ENCODE measurements at regions of chr6 and their contacts with region 1.

Region 1: GRCh38 chr6:156776840-156777576 is at the start of gene ARID1B:
- DNase-seq: peak; percentile 94
- H3K4me3 Mint-ChIP-seq: peak within 1 kb of the TSS; percentile 94
- H3K27ac Mint-ChIP-seq: peak within 1 kb of the TSS; percentile 99
- H3K4me1 Mint-ChIP-seq: peaks cover 26% of the 10 kb centered on the region
- H3K27me3 Mint-ChIP-seq: no peaks in the 10 kb centered on the region
- total RNA-seq, gene ARID1B: 61.7 and 67.5 TPM in 2 replicates

Region 2: GRCh38 chr6:156564127-156564806 is 212.7 kb before region 1 on chr6:
- intact Hi-C with region 1: loop called (anchors 10 kb)
- DNase-seq: peak; percentile 92
- H3K4me3 Mint-ChIP-seq: no peak overlapping the region
- H3K27ac Mint-ChIP-seq: no peak overlapping the region
- H3K4me1 Mint-ChIP-seq: peaks cover 2% of the 10 kb centered on the region
- H3K27me3 Mint-ChIP-seq: peaks cover 13% of the 10 kb centered on the region

Region 3: GRCh38 chr6:156857573-156857972 is 80.6 kb after region 1 on chr6:
- intact Hi-C with region 1: loop called (anchors 1 kb)
- DNase-seq: no peak
- H3K4me3 Mint-ChIP-seq: no peak overlapping the region
- H3K27ac Mint-ChIP-seq: peak overlapping the region; percentile 92
- H3K4me1 Mint-ChIP-seq: peaks cover 48% of the 10 kb centered on the region
- H3K27me3 Mint-ChIP-seq: no peaks in the 10 kb centered on the region

Region 4: DNA sequence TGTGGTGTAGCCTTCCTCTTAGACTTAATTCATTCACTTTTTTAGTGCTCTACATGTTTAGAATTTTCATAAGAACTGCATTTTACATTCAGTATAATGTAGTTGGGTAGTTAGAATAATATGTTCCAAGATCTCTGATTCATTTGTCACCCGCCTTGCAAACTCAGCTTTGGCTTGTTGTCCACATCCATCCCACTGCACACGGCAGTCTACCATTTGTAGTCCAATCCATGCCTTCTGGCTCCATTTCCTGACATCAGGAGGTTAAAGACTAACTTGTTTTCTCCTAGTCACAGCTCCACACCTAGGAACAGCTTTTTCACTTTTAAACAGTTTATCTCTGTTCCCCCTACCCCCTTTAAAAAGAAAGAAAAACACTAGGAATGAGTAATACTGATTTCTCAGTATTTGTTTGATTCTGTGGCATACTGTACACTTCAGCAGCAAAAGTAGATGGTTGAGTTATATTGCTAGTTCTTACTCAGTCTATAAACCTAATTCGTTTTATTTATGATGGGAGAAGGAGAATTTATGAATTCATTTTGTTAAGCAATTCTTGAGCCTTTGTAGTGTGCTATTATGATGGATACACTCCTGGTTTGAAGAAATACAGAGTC is 181.0 kb after region 1 on chr6:
- intact Hi-C with region 1: loop called (anchors 5 kb)
- DNase-seq: no peak
- H3K4me3 Mint-ChIP-seq: no peak overlapping the region
- H3K27ac Mint-ChIP-seq: peak overlapping the region; percentile 72
- H3K4me1 Mint-ChIP-seq: peaks cover 34% of the 10 kb centered on the region
- H3K27me3 Mint-ChIP-seq: no peaks in the 10 kb centered on the region

Region 5: DNA sequence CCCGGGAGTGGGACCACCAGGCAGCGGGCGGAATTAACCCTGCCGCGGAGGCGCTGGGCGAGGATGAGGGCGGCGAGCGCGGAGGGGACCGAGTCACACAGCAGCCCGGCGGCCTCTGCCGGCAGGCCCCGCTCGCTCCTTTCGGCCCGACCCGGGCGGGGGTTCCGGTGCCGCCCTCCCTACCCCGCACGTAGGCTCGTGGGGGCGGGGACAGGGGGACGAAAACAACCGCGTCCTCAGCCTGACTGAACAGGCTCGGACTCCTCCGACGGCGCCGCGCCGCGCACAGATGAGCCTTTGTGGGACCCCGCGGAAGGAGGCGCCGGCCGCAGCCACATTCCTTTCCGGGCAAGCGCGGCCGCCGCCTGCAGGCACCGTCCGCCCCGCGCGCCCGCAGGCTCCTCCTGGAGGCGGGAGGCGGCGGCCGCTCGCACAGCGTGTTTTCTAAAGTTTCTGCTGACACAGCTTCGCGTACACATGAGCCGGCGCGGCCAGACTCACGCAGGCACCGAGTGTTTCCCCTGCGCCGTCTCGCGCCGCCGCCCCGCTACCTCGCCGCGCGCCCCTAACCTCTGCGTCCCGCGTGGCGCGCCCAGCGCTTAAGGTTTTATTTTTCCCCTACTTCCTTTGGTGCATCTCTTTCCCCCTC is 244.5 kb after region 1 on chr6:
- intact Hi-C with region 1: loop called (anchors 1 kb)
- DNase-seq: peak; percentile 97
- H3K4me3 Mint-ChIP-seq: peak overlapping the region; percentile 92
- H3K27ac Mint-ChIP-seq: peak overlapping the region; percentile 100
- H3K4me1 Mint-ChIP-seq: peaks cover 38% of the 10 kb centered on the region
- H3K27me3 Mint-ChIP-seq: no peaks in the 10 kb centered on the region

Region 6: GRCh38 chr6:157184202-157185020 is 407.4 kb after region 1 on chr6:
- intact Hi-C with region 1: loop called (anchors 5 kb)
- DNase-seq: peak; percentile 88
- H3K4me3 Mint-ChIP-seq: no peak overlapping the region
- H3K27ac Mint-ChIP-seq: peak overlapping the region; percentile 25
- H3K4me1 Mint-ChIP-seq: peaks cover 6% of the 10 kb centered on the region
- H3K27me3 Mint-ChIP-seq: no peaks in the 10 kb centered on the region

Region 7: DNA sequence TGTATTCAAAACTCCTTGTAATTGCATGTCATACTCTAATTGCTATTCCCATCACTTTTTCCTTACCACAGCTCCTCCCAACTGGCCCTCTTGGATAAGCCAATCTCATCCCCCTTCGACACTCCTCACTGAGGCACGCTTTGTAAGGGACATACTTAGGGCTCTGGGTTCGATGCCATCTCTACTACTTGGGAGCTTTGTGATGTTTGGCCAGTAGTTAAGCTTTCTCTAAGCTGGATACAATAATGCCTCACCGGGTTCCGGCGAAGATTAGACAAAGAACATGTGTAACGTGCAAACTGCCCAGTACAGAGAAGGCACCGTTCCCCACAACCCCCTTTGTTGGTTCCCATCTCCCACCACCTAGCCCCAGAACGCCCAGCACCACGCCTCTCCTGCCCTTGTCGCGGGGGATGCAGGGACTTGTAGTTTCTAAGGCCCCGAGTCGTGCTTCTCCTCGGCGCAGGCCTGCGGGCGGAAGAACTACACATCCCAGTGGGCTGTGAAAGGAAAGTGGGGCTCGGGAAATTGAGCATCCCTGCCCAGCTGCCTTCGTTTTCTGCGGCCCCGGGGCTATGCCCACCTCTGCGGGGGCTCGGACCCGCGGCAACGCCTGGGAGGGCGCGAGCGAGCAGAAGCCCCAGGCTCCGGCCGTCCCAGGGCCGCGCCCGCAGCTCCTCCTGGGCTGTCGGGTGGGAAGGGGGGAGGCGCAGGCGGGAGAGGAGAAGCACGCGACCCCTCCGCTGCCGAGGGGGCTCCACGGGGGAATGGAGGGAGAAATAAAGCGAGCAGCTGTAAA is 602.8 kb after region 1 on chr6:
- intact Hi-C with region 1: loop called (anchors 5 kb)
- DNase-seq: peak; percentile 96
- H3K4me3 Mint-ChIP-seq: peak overlapping the region; percentile 82
- H3K27ac Mint-ChIP-seq: peak overlapping the region; percentile 85
- H3K4me1 Mint-ChIP-seq: peaks cover 31% of the 10 kb centered on the region
- H3K27me3 Mint-ChIP-seq: peaks cover 14% of the 10 kb centered on the region

Measured in activated CD4-positive, alpha-beta T cell treated with anti-CD3 and anti-CD28 coated beads, Interleukin-2, amount 10 ng/mL, durations not matched to agents 24 days and 14 days (primary cell).